CD4-positive, alpha-beta T cell (primary cell): ENCODE measurements at regions of chr1 and their contacts with region 1.

Region 1: GRCh38 chr1:67332653-67333529 is 25.2 kb downstream of the IL12RB2 start:
- DNase-seq: peak in 3 of 14 experiments; percentile 67 to 77 (median 73)
- ATAC-seq: peak; percentile 64
- H3K4me3 ChIP-seq: no peak overlapping the region
- H3K4me3 Mint-ChIP-seq: no peak overlapping the region
- H3K27ac ChIP-seq: peak overlapping the region in 1 of 2 donors; percentile 39
- H3K27ac Mint-ChIP-seq: peak overlapping the region; percentile 22
- H3K4me1 ChIP-seq: peaks cover 19% of the 10 kb centered on the region
- H3K4me1 Mint-ChIP-seq: peaks cover 43% of the 10 kb centered on the region
- H3K27me3 ChIP-seq: no peaks in the 10 kb centered on the region
- H3K27me3 Mint-ChIP-seq: no peaks in the 10 kb centered on the region
- CTCF ChIP-seq: no peak

Region 2: DNA sequence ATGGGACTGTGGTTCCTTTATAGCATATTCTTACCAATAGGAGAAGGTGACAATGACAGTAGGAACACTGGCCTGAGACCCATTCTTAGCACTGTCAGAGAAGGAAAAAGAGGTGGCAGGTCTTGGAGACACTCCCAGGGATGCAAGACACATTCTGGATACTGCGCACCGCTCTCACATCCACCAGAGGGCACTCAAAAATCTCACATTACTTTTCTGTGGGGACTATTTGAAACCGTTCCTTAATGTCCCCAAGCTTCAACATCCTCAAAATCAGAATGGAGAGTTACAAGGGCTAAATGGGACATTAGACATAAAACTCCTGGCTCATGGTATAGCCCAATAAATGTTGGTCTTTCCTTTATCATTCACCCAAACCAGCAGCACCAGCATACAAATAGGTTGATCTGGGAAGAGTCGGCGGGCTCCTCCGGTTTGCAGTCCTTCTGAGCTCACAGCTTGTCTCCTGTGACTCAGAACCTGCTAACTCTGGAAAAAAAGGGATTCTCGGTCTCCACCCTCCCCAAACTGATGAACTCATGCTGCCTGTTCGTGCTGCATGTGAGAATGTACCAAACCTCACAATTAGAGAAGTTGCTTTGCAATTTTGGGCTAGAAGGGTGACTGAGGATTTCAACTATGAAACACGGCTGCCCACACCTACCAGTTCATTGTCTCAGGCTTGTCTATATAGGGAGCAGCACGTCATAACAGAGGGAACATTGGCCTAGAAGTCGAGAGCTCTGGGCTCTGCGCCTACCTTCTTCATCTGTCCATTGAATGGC is 15.0 kb after region 1 on chr1:
- CTCF ChIA-PET with region 1: interaction called, 13 read pairs
- POLR2A ChIA-PET with region 1: no interaction called
- intact Hi-C with region 1: no loop called
- DNase-seq: peak in 4 of 14 experiments; percentile 9 to 31 (median 25)
- ATAC-seq: no peak
- H3K4me3 ChIP-seq: no peak overlapping the region
- H3K4me3 Mint-ChIP-seq: no peak overlapping the region
- H3K27ac ChIP-seq: no peak overlapping the region
- H3K27ac Mint-ChIP-seq: no peak overlapping the region
- H3K4me1 ChIP-seq: peaks cover 4% of the 10 kb centered on the region
- H3K4me1 Mint-ChIP-seq: peaks cover 7% of the 10 kb centered on the region
- H3K27me3 ChIP-seq: no peaks in the 10 kb centered on the region
- H3K27me3 Mint-ChIP-seq: no peaks in the 10 kb centered on the region
- CTCF ChIP-seq: peak; percentile 20